GM10248 (cell line): ENCODE measurements at regions of chr2 and their contacts with region 1.

Region 1: DNA sequence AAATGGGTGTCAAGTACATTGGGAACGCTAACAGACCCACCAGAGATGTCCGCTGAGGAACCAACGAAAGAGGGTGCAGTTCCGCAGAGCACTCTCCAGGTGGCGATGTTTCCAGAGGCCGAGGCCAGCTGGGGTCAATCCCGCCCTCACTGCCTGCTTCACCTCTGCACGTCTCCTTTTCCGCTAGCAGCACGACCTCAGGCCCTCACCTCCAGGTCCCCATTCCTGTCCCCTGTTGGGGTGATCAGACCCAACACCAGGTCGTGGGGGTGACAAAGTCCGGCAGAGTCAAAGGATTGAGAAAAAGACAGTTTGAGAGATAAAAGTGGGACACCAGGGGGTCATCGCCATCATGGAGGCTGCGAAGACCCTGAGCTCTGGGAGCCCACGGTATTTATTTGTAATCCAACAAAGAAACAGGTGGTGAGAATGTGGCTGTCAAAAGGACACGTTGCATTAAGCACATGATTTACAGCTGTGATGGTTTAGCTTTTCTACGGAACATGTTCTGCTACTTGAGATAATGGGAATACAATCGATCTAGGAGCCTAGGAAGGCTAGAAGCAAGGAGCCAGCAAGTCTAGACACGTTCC is 27.3 kb downstream of the ZAP70 start:
- DNase-seq: peak; percentile 87
- CTCF ChIP-seq: peak; percentile 80

Region 2: DNA sequence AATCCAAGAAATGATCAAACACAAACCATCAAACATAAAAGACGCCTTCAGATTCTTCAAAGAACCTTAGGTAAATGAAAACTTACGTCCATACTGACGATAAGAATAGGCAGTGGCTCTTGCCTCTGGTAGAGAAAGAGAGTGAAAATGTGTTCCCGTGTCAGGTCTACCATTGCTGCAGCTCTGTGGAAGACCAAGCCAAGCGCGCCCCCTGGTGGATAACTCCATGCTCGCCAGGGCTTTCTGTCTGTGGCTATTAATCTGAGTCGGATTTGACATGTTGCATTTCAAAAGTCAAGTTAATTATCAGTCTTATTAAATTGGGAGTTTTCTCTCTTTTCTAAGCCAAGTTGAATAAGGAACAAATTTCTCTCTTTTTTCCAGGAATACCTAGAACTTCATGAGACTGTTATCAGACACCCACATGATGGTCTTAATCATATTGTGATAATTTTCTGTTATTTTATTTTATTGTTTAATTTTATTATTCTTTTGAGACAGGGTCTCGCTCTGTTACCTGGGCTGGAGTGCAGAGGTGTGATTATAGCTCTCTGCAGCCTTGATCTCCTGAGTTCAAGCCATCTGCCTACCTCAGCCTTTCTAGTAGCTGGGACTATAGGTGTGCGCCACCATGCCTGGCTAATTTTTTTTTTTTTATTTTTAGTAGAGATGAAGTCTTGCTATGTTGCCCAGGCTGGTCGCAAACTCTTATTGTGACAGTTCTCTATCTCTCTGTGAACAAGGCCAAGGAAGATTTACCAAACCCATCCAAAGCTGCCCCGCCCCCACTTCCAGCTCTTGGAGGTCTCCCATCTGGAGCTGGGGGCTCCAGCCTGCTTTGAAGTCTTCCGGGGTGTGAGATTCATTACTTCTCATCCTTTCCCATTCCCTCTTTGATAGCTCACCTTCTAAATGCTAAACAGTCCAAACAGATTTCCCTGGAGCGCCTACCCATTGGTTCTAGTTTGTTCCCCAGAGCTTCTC is 43.1 kb before region 1 on chr2:
- CTCF ChIA-PET with region 1: interaction called, 30 read pairs
- POLR2A ChIA-PET with region 1: no interaction called
- DNase-seq: peak; percentile 82
- CTCF ChIP-seq: peak; percentile 79

Region 3: GRCh38 chr2:97718051-97718882 is 22.4 kb before region 1 on chr2:
- CTCF ChIA-PET with region 1: interaction called, 14 read pairs
- POLR2A ChIA-PET with region 1: no interaction called
- DNase-seq: peak; percentile 72
- CTCF ChIP-seq: no peak

Region 4: GRCh38 chr2:97751752-97752151 is 11.1 kb after region 1 on chr2:
- CTCF ChIA-PET with region 1: interaction called, 33 read pairs
- POLR2A ChIA-PET with region 1: no interaction called
- DNase-seq: no peak
- CTCF ChIP-seq: no peak

Region 5: DNA sequence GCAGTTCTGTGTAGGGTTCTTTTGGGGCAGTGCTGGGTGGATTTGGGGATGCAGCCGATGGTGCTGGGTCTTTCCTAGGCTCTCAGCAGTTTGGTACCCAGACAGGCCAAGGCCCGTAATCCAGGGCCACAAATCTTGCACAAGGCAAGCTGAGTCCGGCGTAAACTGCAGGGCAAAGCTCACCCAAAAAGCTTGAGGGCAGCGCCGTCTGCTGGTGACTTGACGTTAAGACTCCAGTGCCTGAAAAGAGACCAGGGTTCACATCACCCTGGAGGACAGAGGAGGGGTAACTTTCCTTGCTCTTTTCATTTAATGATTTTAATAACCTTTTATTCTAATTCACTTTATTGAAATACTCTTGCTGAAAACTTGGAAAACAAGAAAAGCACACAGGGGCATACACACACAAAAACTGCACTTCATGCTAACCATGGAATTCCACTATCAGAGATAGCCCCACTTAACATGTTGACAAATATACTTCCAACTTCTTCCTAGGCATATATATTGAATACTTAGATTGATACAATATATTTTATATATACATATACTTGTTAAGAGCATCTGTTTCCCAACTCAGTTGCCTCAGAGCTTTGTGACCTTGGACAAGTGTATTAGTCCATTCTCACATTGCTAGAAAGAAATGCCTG is 644.5 kb after region 1 on chr2:
- CTCF ChIA-PET with region 1: interaction called, 65 read pairs
- POLR2A ChIA-PET with region 1: no interaction called
- DNase-seq: peak; percentile 84
- CTCF ChIP-seq: peak; percentile 97